ENCODE measurements at regions of chr15 and their contacts with region 1.

Region 1: GRCh38 chr15:40367686-40368611 is 9.9 kb downstream of the DISP2 start:
- DNase-seq: peak; percentile 93
- H3K4me3 Mint-ChIP-seq: peak overlapping the region; percentile 71
- H3K27ac Mint-ChIP-seq: peak overlapping the region; percentile 2
- H3K4me1 Mint-ChIP-seq: peaks cover 16% of the 10 kb centered on the region
- H3K27me3 Mint-ChIP-seq: no peaks in the 10 kb centered on the region

Region 2: DNA sequence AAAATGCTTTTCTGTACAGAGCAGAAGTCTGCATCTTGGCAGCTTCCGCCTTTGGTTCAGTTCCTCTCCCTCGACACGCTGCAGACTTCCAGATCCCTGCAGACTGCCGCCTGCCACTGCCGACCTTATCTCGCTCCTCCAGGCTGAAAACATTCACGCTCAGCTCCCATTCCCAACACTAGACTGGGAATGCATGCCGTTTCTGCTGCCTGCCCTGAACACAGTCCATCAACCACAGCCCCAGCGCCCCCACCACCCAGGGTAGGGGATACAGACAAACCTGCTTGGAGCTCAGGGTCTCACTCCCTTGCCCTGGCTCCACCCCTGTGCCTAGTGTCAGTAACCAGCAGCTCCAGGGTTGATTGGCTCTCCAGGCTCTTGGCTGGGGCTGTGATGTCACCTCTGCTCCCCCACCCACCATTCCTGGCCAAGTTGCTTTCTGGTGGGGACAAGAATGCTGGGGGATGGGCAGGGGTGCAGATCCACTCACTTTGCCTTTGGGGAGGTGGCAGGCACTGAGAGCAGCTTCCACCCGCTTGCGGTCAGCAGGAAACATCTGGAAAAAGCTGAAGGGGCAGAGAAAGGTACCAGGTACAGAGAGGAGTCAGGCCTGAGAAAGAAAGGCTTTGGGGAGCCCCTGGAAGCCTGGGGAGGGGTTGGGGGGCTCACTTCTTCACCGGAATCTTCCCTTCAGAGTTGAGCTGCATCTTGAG is 66.3 kb before region 1 on chr15:
- CTCF ChIA-PET with region 1: no interaction called
- POLR2A ChIA-PET with region 1: no interaction called
- intact Hi-C with region 1: no loop called
- DNase-seq: no peak
- H3K4me3 Mint-ChIP-seq: no peak overlapping the region
- H3K27ac Mint-ChIP-seq: no peak overlapping the region
- H3K4me1 Mint-ChIP-seq: peaks cover 10% of the 10 kb centered on the region
- H3K27me3 Mint-ChIP-seq: no peaks in the 10 kb centered on the region

Region 3: DNA sequence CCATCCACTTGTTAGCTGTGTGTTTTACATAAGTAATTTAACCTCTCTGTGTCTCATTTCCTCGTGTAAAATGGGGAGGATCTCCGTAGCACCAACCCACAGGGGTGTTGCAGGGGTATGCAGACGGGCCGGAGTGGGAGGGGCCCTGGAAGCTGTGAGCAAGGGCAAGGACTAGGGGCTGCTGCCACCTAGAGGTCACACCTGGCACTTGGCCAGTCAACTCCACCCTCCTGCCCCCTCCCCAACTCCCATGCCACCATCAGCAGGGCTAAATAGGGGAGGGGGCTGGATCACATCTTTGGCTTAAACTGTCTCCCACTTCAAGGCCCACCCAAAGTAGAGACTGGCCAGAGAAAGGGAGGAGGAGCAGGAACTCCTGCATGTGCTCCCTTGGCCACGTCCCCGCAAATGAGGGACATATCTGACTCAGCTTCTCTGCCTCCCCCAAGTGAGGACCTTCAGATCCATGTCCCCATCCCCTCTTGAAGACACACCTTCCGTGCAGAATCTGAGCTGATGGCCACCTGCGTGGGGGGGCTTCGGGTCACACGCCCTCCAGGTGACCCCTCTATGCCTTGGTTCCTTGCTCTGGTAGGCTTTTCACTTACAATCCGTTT is 29.8 kb before region 1 on chr15:
- CTCF ChIA-PET with region 1: interaction called, 49 read pairs
- POLR2A ChIA-PET with region 1: no interaction called
- intact Hi-C with region 1: no loop called
- DNase-seq: peak; percentile 84
- H3K4me3 Mint-ChIP-seq: peak overlapping the region; percentile 26
- H3K27ac Mint-ChIP-seq: peak overlapping the region; percentile 5
- H3K4me1 Mint-ChIP-seq: peaks cover 11% of the 10 kb centered on the region
- H3K27me3 Mint-ChIP-seq: no peaks in the 10 kb centered on the region

Region 4: DNA sequence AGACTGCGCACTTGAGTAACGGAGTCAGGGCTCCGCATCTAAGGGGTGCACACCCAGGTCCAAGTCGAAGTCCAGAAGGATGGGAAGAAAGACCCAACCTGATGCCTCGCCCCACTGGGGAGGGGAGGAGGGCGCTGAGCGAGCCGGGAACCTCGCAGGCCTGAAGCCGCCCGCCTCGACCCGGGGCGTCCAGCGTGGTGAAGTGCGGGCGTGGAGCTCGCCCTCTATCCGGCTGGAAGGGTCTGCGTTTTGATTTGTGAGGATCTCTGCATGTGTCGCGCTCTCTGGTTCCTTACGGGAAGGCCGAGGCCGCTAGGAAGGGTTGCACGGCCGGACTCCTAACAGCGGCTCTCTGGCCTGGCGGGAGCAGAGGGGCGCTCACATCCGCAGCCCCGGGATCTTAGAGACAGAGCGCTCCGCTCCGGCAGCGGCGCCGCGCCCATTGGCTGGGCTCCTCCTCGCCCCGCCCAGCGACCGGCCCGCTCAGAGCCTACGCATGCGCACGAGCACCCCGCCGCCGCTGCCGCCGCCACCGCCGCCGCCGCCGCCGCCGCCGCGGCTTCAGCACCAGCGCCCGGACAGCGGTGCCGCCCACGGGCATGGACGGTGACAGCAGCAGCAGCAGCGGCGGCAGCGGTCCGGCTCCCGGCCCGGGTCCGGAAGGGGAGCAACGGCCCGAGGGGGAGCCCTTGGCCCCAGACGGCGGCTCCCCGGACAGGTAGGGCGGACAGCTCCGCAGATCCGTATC is 10.1 kb before region 1 on chr15 and contains the start of gene DISP2:
- CTCF ChIA-PET with region 1: interaction called, 11 read pairs
- POLR2A ChIA-PET with region 1: no interaction called
- intact Hi-C with region 1: loop called (anchors 1 kb)
- DNase-seq: peak; percentile 94
- H3K4me3 Mint-ChIP-seq: peak within 1 kb of the TSS; percentile 74
- H3K27ac Mint-ChIP-seq: no peak within 1 kb of the TSS
- H3K4me1 Mint-ChIP-seq: peaks cover 5% of the 10 kb centered on the region
- H3K27me3 Mint-ChIP-seq: no peaks in the 10 kb centered on the region
- total RNA-seq, gene DISP2: 0.02 to 0.05 TPM

Region 5: GRCh38 chr15:40398413-40398873 is 30.5 kb after region 1 on chr15:
- CTCF ChIA-PET with region 1: interaction called, 3 read pairs
- POLR2A ChIA-PET with region 1: interaction called, 3 read pairs
- intact Hi-C with region 1: loop called (anchors 1 kb)
- DNase-seq: peak; percentile 55
- H3K4me3 Mint-ChIP-seq: no peak overlapping the region
- H3K27ac Mint-ChIP-seq: no peak overlapping the region
- H3K4me1 Mint-ChIP-seq: peaks cover 24% of the 10 kb centered on the region
- H3K27me3 Mint-ChIP-seq: no peaks in the 10 kb centered on the region

Region 6: DNA sequence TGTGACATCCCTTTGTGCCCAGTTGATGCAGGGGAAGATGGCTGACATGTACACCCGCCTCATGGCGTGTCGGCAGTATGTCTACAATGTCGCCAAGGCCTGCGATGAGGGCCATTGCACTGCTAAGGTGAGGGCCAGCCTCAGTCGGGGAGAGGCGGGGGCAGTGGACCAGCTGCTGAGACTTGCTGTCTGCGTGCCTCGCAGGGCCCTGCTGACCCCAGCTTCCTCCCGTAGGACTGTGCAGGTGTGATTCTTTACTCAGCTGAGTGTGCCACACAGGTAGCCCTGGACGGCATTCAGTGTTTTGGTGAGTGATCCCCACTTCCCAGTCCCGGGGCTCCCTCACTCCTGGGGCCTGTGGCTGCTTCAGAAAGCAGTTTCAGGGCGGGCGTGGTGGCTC is 48.1 kb after region 1 on chr15:
- CTCF ChIA-PET with region 1: interaction called, 30 read pairs
- POLR2A ChIA-PET with region 1: no interaction called
- intact Hi-C with region 1: loop called (anchors 1 kb)
- DNase-seq: no peak
- H3K4me3 Mint-ChIP-seq: no peak overlapping the region
- H3K27ac Mint-ChIP-seq: no peak overlapping the region
- H3K4me1 Mint-ChIP-seq: no peaks in the 10 kb centered on the region
- H3K27me3 Mint-ChIP-seq: no peaks in the 10 kb centered on the region

Region 7: DNA sequence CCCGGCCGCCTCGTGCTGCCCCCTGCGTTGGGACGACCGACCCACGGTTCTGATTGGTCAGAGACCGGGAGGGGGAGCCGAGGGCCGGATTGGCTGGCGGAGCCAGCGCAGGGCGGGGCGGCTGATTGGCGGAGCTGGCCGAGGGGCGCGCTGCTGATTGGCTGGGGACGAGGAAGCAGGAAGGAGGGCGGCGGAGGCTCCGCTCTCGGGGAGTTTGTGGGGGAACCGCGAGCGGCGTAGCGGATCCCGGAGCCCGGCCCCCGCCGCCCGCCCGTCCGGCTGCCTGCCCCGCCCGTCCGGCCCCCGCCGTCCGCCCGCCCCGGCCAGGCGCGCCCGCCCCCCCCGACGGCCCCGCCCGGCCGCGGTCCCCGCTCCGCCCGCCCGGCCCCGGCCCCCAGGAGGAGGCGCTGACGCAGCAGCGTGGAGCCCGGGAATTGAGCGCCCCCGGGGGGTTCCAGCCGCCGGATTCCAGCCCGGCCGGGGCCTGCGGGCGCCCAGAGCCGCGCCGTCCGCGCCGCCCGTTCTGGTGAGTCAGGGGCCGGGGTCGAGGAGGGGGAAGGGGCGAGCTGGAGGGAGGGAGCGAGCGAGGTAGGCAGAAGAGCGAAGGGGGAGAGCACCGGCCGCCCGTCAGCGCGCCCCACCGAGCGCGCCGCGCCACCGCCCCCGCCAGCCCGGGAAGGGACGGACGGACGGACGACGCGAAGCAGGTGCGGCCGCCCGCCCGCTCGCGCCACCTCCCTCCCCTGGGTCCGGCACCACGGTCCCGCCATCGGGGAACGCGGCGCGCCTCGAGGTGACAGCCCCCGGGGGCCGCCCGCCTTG is 73.0 kb after region 1 on chr15 and contains the start of gene BAHD1:
- CTCF ChIA-PET with region 1: interaction called, 5 read pairs
- POLR2A ChIA-PET with region 1: no interaction called
- intact Hi-C with region 1: loop called (anchors 5 kb)
- DNase-seq: peak; percentile 97
- H3K4me3 Mint-ChIP-seq: peak within 1 kb of the TSS; percentile 87
- H3K27ac Mint-ChIP-seq: peak within 1 kb of the TSS; percentile 55
- H3K4me1 Mint-ChIP-seq: peaks cover 59% of the 10 kb centered on the region
- H3K27me3 Mint-ChIP-seq: peaks cover 24% of the 10 kb centered on the region
- total RNA-seq, gene BAHD1: 18.8 to 19.5 TPM

Measured in activated CD4-positive, alpha-beta memory T cell treated with anti-CD3 and anti-CD28 coated beads for 36 hours (primary cell).